Gastrocnemius medialis (tissue), 4 donors: ENCODE measurements at regions of chr6 and their contacts with region 1.

Region 1: DNA sequence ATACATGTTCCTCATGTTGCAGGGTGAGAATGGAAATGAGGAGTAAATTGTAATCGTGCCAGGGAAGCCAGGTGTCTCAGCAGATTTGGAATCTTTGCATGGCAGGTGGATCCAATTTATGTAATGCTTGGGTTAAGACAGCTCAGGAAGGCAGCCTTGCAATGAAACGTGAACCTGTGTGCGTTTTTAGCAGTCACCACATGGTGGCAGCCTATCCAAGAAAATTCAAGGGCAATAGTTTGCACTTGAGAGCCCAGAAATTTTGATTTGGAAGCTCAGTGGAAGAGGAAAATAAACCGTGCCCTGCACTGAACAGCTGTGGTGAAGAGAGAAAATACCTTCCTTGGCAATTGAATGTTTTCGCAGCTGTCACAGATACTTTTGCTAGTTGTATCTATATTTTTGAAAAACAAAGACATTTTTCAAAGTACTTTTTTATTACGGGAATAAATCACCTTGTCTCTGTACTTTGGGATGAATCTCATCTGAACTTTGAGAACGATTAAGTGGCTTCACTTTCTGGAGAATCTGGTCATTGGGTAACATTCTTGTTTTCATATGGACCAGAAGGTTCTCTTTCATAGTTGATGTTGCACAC is 26.5 kb downstream of the MTHFD1L start:
- DNase-seq: peak; percentile 27 to 52
- ATAC-seq: peak; percentile 84 to 89
- H3K4me3 ChIP-seq: no peak overlapping the region
- H3K27ac ChIP-seq: no peak overlapping the region
- H3K4me1 ChIP-seq: peaks cover 7 to 12% of the 10 kb centered on the region in 2 donors
- H3K27me3 ChIP-seq: peaks cover 0 to 4% (median 2%) of the 10 kb centered on the region in 3 donors
- CTCF ChIP-seq: peak; percentile 65 to 86 (median 71)
- POLR2A ChIP-seq: no peak

Region 2: DNA sequence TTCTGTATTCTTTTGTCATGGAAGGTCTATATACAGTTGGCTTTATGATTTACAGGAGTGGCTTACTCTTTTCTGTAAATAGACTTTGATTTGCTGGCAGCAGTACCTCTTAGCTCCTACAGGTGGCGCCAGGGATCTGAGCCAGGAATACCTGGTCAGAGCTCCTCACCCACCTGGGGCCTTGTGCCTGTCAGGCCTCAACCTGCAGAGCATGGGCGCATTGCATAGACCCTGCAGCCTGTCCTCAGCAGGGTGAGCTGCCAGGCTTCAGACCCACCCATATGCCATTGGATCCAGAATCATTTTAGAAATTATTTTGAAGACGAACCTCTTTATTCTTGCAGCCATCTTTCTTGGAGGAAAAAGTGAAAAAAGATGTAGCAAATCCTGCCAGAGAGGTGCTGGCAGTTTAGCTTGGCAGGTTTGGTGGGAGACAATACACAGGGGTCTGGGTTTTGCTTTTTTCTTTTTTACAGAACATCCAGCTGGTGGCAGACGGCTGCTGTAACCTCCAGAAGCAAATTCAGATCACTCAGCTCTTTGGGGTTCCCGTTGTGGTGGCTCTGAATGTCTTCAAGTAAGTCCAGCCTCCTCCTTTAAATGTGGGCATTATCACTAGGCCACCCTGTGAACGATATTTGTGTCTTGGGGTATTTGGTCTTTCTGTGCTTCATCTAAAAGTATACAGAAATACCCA is 122.6 kb after region 1 on chr6:
- in situ Hi-C with region 1: loop called in 2 of 4 experiments (anchors 5 to 10 kb)
- intact Hi-C with region 1: loop called (anchors 2 kb)
- DNase-seq: peak; percentile 31 to 42
- ATAC-seq: no peak
- H3K4me3 ChIP-seq: no peak overlapping the region
- H3K27ac ChIP-seq: no peak overlapping the region
- H3K4me1 ChIP-seq: no peaks in the 10 kb centered on the region
- H3K27me3 ChIP-seq: no peaks in the 10 kb centered on the region
- CTCF ChIP-seq: peak; percentile 82 to 92 (median 86)
- POLR2A ChIP-seq: no peak

Region 3: GRCh38 chr6:151323791-151324487 is 432.0 kb after region 1 on chr6:
- in situ Hi-C with region 1: loop called in 1 of 4 experiments (anchors 5 kb)
- intact Hi-C with region 1: loop called (anchors 1 kb)
- DNase-seq: peak; percentile 59 to 78
- ATAC-seq: peak; percentile 88 to 90
- H3K4me3 ChIP-seq: no peak overlapping the region
- H3K27ac ChIP-seq: peak overlapping the region; percentile 40 to 73 (median 72)
- H3K4me1 ChIP-seq: peaks cover 12 to 22% of the 10 kb centered on the region in 2 donors
- H3K27me3 ChIP-seq: peaks cover 7 to 21% (median 14%) of the 10 kb centered on the region in 3 donors
- CTCF ChIP-seq: peak; percentile 80 to 97 (median 94)
- POLR2A ChIP-seq: no peak

Region 4: DNA sequence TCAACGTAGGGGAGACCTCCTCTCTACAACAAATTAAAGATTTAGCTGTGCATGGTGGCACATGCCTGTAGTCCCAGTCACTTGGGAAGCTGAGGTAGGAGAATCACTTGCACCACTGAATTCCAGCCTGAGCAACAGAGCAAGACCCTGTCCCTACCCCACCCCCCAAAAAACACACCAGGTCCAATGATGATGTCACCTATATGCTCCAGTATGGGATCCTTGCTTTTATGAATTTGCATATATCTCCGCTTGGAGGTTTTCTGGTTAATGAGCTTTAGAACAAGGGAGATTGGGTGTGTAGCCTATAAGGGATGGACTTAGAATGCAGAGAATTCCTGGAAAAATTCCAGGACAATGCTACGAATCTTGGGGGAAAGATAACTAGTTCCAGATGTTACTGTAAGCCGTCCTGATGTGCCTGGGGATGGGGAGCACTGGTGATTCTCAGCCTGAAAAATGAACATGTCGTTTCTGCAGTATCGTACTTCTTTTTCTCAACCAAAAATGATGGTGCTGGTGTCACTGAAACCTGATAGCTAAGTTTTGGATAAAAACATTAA is 438.2 kb after region 1 on chr6:
- in situ Hi-C with region 1: loop called (anchors 5 kb)
- intact Hi-C with region 1: loop called (anchors 1 kb)
- DNase-seq: no peak
- ATAC-seq: no peak
- H3K4me3 ChIP-seq: no peak overlapping the region
- H3K27ac ChIP-seq: no peak overlapping the region
- H3K4me1 ChIP-seq: peaks cover 2 to 5% of the 10 kb centered on the region in 2 donors
- H3K27me3 ChIP-seq: peaks cover 2 to 13% (median 4%) of the 10 kb centered on the region in 3 donors
- CTCF ChIP-seq: no peak
- POLR2A ChIP-seq: no peak

Region 5: DNA sequence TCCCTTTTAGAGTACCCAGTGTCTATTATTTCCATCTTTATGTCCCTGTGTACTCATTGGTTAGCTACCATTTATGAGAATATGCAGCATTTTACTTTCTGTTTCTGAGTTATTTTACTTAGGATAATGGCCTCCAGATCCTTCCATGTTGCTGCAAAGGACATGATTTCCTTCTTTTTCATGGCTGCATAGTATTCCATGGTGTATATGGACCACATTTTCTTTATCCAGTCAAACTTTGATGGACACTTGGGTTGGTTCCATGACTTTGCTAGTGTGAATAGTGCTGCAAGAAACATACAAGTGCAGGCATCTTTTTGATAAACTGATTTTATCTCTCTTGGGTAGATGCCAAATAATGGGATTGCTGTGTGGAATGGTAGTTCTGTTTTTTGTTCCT is 443.9 kb after region 1 on chr6:
- in situ Hi-C with region 1: loop called in 3 of 4 experiments (anchors 5 kb)
- intact Hi-C with region 1: loop called (anchors 2 kb)
- DNase-seq: no peak
- ATAC-seq: no peak
- H3K4me3 ChIP-seq: no peak overlapping the region
- H3K27ac ChIP-seq: no peak overlapping the region
- H3K4me1 ChIP-seq: no peaks in the 10 kb centered on the region
- H3K27me3 ChIP-seq: no peaks in the 10 kb centered on the region
- CTCF ChIP-seq: no peak
- POLR2A ChIP-seq: no peak

Region 6: DNA sequence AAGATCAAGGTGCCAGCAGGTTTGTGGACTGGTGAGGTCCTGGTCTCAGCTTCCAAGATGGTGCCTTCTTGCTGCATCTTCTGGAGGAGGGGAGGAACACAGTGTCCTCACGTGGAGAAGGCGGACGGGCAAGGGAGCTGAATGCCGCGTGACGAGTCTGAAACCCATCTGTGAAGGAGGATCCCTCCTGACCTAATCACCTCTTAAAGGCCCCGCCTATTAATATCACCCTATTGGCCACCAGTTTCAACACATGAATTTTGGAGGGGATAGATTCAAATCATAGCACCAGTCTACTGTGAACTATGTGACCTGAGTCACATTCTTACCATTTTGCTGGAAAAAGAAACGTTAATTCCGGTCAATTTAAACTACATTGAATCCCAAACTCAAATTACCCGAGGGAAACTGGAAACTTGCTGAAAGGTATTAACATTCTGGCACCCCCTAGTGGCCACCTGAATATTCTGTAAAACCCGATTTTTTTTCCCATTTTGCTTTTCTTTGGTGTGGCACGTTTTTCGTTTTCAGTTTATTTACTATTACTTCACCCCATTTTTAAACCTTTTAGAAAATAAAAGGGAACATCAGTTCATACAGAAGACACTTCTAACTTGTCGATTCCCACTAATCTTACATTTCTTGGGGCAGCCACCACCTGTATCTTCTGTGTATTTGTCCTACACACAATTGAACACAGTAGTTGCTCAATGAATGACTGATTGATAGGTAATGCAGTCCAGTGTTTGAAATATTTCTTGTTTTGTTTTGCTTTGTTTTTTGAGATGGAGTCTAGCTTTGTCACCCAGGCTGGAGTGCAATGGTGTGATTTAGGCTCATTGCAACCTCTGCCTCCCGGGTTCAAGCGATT is 583.9 kb after region 1 on chr6:
- in situ Hi-C with region 1: loop called in 2 of 4 experiments (anchors 25 kb)
- intact Hi-C with region 1: loop called (anchors 10 kb)
- DNase-seq: no peak
- ATAC-seq: peak in 1 of 2 donors; percentile 44
- H3K4me3 ChIP-seq: peak overlapping the region in 1 of 4 donors; percentile 16
- H3K27ac ChIP-seq: no peak overlapping the region
- H3K4me1 ChIP-seq: no peaks in the 10 kb centered on the region
- H3K27me3 ChIP-seq: no peaks in the 10 kb centered on the region
- CTCF ChIP-seq: peak; percentile 27 to 81 (median 72)
- POLR2A ChIP-seq: no peak